Head of caudate nucleus (tissue), 42 donors: ENCODE measurements at regions of chr11 and their contacts with region 1.

Region 1: DNA sequence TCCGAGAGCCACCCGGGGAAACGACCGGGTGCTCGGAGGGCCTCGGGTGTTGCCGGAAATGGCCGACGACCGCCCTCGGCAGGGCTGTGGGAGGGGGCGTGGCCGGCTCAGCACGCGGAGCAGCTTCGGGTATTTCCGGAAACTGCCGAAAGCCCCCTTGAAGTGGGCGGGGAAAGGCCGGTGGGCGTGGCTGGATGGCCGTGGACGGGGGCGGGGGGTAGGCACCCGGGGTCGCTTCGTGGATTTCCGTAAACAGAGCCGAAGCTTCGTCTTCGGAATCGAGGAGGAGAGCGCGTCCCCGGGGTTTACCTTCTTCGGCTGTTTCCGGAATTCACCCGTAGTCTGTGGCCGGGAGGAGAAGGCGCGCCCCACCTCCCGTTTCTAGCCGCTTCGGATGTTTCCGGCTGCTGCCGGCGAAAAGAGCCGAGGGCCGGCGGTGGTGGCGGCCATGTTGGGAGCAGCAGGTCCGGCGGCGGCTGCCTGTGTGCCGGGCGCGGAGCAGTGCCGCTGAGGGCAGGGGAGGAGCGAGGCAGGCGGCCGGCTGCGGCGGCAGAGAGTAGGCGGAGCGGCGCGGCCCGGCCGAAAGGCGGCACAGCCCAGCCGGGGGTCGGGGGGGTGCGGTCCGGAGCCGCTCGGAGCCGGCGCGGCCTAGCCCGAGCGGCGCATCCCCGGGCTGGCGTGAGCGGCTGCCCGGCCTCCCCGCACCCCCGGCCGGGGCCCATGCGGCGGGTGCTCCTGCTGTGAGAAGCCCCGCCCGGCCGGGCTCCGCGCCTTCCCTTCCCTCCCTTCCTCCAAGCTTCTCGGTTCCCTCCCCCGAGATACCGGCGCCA is at the start of gene MARK2:
- DNase-seq: peak; percentile 93 to 100 (median 99)

Region 2: DNA sequence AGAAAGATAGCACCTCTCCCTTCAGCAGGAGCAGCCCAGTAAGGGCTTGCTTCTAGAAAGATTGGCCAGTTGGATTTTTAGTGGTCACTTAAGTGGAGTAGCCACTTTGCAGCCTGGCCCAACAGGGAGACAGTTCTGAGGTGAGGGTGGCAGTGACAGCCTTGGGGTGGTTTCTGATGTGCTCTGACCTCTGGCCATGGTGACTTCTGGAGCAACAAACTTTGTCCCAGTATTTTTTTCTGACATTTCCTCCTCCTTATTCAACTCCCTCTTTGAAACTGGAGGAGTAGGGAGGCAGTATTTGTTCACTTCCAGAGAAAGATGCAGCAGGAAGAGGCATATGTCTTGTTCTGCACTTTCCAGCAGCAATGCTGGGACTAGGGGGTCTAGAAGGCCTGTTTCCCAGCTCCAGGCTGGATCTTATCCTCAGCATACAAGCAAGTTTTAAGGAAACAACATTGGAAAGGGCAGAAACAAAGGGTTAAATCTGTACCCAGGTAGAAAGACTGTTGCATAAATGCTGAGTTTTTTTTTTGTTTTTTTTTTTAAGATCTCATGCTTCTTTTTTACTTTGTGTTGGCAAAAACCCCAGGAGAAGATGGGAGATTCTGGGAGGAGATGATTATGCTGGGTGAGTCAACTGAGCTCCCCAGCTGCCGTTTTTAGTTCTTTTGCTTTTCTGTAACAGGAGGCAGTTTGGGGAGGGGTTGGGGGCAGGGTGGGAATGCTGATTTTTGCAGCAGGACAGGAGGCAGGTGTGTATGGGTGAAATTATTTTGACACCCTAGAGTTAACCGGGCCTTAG is 40.9 kb after region 1 on chr11:
- intact Hi-C with region 1: loop called (anchors 2 kb)
- DNase-seq: peak in 20 of 42 donors; percentile 28 to 77 (median 46)

Region 3: DNA sequence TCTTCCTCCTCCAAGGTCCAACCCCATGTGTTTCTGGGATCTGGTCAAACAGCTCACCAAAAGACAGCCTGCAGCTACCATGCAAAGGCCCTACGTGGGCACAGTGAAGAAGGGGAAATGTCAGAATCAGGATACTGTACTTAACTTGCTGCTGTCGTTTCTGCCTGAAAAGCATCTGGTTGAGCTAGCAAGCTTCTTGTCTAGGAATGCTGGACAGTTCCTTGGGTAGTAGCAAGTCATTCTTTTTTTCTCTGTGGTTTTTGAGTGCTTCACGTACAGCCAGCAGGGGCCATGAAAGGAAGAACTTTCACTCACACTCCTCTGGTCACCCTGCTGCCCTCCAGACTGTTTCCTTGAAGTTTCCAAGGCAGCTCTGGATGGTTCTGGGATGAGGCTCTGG is 53.3 kb after region 1 on chr11:
- intact Hi-C with region 1: no loop called
- DNase-seq: no peak

Region 4: GRCh38 chr11:63938479-63939396 is 99.8 kb after region 1 on chr11 and contains the start of gene NAA40:
- intact Hi-C with region 1: loop called (anchors 2 kb)
- DNase-seq: peak; percentile 65 to 95 (median 87)